Lower leg skin (tissue), 4 donors: ENCODE measurements at regions of chr2 and their contacts with region 1.

Region 1: GRCh38 chr2:232979871-232980461 is 33.1 kb downstream of the NGEF start:
- DNase-seq: peak in 1 of 2 donors; percentile 73
- H3K4me3 ChIP-seq: no peak overlapping the region
- CTCF ChIP-seq: no peak
- POLR2A ChIP-seq: no peak

Region 2: DNA sequence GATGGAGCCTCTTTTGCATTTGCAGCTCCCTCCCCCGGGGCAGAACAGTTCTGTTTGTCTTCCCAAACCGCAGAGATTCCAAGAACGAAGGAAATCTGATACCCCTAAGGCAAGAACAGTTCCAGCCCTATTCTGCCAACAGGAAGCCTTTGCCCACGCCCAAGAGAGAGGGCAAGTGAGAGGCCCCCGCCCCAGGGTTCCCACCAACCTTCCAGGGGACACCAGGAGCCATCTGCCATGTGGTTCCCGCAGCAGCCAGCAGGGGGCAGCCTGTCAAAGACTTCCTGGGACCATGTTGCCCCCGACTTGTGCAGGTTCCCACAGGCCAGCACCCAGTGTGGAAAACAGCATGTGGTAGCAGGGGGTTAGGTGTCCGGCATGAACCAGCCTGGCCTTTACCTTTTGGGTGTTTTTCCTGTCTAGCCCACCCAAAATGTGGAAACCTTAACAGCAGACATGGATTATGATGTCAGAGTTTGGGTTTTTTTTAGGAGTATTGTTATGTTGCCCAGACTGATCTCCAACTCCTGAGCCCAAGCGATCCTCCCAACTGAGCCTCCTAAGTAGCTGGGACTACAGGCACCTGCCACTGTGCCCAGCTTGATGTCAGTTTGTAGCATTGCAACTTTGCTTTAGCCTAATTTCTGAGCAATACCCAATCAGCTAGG is 368.3 kb before region 1 on chr2:
- intact Hi-C with region 1: no loop called
- DNase-seq: peak in 1 of 2 donors; percentile 92
- H3K4me3 ChIP-seq: no peak overlapping the region
- CTCF ChIP-seq: no peak
- POLR2A ChIP-seq: no peak

Region 3: DNA sequence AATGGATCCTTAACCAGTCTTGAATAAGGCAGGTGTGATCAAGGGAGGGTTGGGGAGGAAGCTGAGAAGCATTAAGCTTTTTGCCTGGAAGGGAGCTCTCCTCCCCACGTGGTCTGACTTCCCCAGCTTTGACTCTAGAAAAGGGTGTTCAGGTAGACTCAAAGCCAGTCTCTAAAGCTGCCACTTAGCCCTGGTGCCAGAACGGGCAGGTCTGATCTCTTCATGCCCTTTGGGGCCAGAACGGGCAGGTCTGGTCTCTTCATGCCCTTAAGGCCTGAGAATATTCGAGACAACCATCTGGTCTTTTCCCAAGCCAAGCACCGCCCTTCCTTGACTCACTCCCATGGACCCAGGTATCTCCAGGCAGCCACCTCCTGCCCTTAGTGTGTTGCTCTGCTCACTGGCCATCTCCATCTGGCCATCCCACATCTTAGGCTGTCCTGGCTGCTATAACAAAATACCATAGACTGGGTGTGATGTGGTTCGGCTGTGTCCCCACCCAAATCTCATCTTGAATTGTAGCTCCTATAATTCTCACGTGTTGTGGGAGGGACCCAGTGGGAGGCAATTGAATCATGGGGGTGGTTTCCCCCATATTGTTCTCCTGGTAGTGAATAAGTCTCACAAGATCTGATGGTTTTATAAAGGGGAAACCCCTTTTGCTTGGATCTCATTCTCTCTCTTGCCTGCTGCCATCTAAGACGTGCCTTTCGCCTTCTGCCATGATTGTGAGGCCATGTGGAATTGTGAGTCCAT is 50.5 kb before region 1 on chr2:
- intact Hi-C with region 1: loop called (anchors 1 kb)
- DNase-seq: no peak
- H3K4me3 ChIP-seq: no peak overlapping the region
- CTCF ChIP-seq: no peak
- POLR2A ChIP-seq: no peak